Naive thymus-derived CD4-positive, alpha-beta T cell (primary cell): ENCODE measurements at regions of chr21 and their contacts with region 1.

Region 1: DNA sequence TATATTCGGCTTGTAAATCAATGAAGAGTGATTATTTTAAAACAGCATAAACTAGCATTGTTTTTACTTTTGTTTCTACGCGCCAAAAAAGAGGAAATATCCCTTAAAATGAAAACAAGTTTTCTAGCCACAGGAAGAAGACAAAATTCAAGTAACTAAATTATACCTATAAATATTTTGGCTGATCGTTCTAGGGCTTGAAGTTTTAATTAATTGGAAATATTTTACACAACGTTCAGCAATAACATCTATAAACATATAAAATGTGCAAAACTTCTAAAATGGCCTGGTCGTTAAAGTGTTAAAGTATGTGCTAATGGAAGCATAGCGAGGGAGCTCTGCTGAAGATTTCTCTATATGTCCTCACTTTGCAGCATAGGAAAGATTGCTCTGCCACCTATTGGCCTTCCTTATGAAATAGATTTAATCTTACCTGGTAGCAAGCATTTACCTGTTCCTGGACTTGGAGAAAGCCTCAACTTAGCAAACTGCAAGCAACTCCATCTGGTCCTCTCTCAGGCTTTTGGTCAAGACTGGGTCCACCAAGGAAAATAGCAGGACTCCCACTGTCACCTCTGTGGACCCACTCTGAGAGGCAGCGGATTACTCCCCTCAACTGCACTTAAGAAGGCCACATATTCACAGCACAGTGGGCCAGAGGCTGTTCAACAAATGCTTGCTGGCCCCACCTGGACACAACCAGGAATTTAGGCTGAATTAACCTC is 351.3 kb upstream of the RUNX1 start:
- DNase-seq: peak in 8 of 9 donors; percentile 23 to 73 (median 63)
- ATAC-seq: peak; percentile 88
- H3K4me3 ChIP-seq: no peak overlapping the region
- H3K4me3 Mint-ChIP-seq: peak overlapping the region in 3 of 10 donors; percentile 0 to 9 (median 1)
- H3K27ac ChIP-seq: no peak overlapping the region
- H3K27ac Mint-ChIP-seq: peak overlapping the region in 1 of 9 donors; percentile 65
- H3K4me1 ChIP-seq: no peaks in the 10 kb centered on the region
- H3K4me1 Mint-ChIP-seq: peaks cover 7 to 21% (median 15%) of the 10 kb centered on the region in 7 donors
- H3K27me3 ChIP-seq: no peaks in the 10 kb centered on the region
- H3K27me3 Mint-ChIP-seq: peaks cover 0 to 4% (median 0%) of the 10 kb centered on the region in 5 donors

Region 2: DNA sequence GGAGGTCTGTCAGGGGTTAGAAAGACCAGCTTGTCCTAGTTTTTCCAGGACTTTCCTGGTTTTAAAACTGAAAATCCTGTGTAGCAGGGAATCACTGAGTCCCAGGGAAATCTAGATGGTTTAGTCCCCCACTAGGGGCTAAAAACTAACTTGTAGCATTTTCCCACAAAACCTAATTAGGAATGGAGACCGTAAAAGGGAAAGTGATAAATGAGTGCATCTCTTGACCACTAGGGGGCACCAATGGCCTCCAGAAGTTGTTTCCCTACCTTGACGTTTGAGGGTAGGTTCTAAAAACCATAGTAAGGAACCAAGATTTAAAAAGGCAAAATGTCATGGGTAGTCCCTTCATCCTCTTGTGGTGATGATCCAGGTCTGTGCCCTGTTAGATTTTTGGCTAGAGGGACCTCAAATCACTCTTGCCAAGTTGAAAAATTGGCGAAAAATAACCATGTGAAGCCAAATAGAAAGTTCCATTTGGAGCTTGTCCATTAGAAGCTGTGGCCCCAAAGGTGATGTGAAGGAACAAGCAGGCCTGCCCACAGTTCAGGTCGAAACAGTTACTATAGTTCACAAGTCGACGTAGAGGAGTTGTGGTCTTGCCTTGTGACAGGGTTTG is 707.1 kb before region 1 on chr21:
- CTCF ChIA-PET with region 1: interaction called, 7 read pairs
- POLR2A ChIA-PET with region 1: no interaction called
- intact Hi-C with region 1: loop called in 1 of 2 experiments (anchors 1 kb)
- DNase-seq: peak in 7 of 9 donors; percentile 33 to 63 (median 58)
- ATAC-seq: peak; percentile 72
- H3K4me3 ChIP-seq: no peak overlapping the region
- H3K4me3 Mint-ChIP-seq: no peak overlapping the region
- H3K27ac ChIP-seq: no peak overlapping the region
- H3K27ac Mint-ChIP-seq: no peak overlapping the region
- H3K4me1 ChIP-seq: no peaks in the 10 kb centered on the region
- H3K4me1 Mint-ChIP-seq: peaks cover 0 to 10% (median 3%) of the 10 kb centered on the region in 7 donors
- H3K27me3 ChIP-seq: peaks cover 0 to 4% of the 10 kb centered on the region in 2 donors
- H3K27me3 Mint-ChIP-seq: peaks cover 2 to 43% (median 10%) of the 10 kb centered on the region in 5 donors

Region 3: DNA sequence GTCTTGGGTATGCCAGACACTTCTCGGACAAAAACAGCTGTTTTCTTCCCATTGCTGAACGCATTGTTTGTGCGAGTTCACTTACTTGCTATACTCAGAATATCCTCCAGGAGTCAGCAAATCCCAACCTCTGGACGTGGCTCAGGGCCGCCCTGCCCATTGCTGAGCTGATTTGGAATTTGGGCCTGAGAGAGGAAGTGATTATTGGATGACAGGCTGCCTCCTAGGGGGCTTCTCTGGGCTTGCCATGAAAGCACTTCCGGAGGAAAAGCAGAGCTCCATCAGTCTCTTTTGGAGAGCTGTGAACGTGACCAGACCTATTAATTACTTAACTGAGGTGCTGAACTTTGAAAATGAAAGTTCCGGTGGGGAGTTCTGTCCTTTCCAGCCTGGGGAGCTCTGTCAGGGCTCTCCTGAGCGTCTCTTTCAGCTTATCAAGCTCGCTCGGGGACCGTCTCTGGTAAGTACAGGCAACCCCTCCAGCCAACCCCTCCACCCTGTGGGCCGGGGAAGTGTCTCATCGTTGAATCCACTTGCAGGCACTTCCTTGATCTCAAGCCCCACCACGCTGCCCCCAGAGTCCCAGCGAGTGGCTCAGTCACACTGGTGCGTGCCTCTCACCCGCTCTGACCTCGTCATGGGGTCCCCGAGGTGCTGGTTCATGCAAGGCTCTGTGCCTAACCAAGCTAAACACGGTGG is 654.7 kb before region 1 on chr21:
- CTCF ChIA-PET with region 1: interaction called, 27 read pairs
- POLR2A ChIA-PET with region 1: interaction called, 4 read pairs
- intact Hi-C with region 1: loop called (anchors 1 kb)
- DNase-seq: peak; percentile 27 to 65 (median 49)
- ATAC-seq: peak; percentile 92
- H3K4me3 ChIP-seq: no peak overlapping the region
- H3K4me3 Mint-ChIP-seq: peak overlapping the region; percentile 25 to 75 (median 60)
- H3K27ac ChIP-seq: no peak overlapping the region
- H3K27ac Mint-ChIP-seq: no peak overlapping the region
- H3K4me1 ChIP-seq: no peaks in the 10 kb centered on the region
- H3K4me1 Mint-ChIP-seq: peaks cover 0 to 5% (median 4%) of the 10 kb centered on the region in 7 donors
- H3K27me3 ChIP-seq: no peaks in the 10 kb centered on the region
- H3K27me3 Mint-ChIP-seq: peaks cover 0 to 19% (median 4%) of the 10 kb centered on the region in 5 donors

Region 4: GRCh38 chr21:34894401-34894800 is 506.0 kb before region 1 on chr21:
- CTCF ChIA-PET with region 1: interaction called, 19 read pairs
- POLR2A ChIA-PET with region 1: interaction called, 7 read pairs
- intact Hi-C with region 1: loop called (anchors 1 kb)
- DNase-seq: no peak
- ATAC-seq: no peak
- H3K4me3 ChIP-seq: no peak overlapping the region
- H3K4me3 Mint-ChIP-seq: peak overlapping the region in 4 of 10 donors; percentile 1 to 49 (median 29)
- H3K27ac ChIP-seq: no peak overlapping the region
- H3K27ac Mint-ChIP-seq: peak overlapping the region in 8 of 9 donors; percentile 48 to 86 (median 78)
- H3K4me1 ChIP-seq: peaks cover 8 to 24% of the 10 kb centered on the region in 2 donors
- H3K4me1 Mint-ChIP-seq: peaks cover 26 to 72% (median 62%) of the 10 kb centered on the region in 7 donors
- H3K27me3 ChIP-seq: no peaks in the 10 kb centered on the region
- H3K27me3 Mint-ChIP-seq: peaks cover 0 to 24% (median 0%) of the 10 kb centered on the region in 5 donors

Region 5: DNA sequence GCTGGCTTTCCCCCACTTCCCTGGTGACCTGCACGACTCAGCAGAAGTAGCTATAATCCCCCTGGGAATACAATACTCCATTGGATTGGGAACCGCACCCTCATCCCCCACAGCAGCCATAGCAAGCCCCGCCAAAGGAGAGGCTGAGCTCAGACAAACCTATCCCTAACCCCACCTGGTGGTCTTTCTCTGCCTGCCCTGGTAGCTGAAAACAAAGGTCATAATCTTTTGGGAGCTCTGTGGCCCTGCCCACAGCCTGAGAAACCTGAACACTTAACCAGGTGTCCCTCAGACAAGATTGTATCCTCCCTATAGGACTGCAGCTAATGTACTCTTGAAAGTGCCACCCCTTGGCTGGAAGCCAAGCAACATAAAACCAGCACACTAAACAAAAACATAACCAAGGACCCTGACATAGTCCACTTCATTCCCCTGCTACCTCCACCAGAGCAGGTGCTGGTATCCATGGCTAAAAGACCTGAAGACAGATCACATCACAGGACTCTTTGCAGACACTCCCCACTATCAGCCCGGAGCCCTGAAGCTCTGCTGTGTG is 279.7 kb before region 1 on chr21:
- CTCF ChIA-PET with region 1: no interaction called
- POLR2A ChIA-PET with region 1: no interaction called
- intact Hi-C with region 1: no loop called
- DNase-seq: no peak
- ATAC-seq: no peak
- H3K4me3 ChIP-seq: no peak overlapping the region
- H3K4me3 Mint-ChIP-seq: no peak overlapping the region
- H3K27ac ChIP-seq: no peak overlapping the region
- H3K27ac Mint-ChIP-seq: peak overlapping the region in 1 of 9 donors; percentile 43
- H3K4me1 ChIP-seq: no peaks in the 10 kb centered on the region
- H3K4me1 Mint-ChIP-seq: peaks cover 0 to 2% (median 0%) of the 10 kb centered on the region in 7 donors
- H3K27me3 ChIP-seq: no peaks in the 10 kb centered on the region
- H3K27me3 Mint-ChIP-seq: no peaks in the 10 kb centered on the region

Region 6: DNA sequence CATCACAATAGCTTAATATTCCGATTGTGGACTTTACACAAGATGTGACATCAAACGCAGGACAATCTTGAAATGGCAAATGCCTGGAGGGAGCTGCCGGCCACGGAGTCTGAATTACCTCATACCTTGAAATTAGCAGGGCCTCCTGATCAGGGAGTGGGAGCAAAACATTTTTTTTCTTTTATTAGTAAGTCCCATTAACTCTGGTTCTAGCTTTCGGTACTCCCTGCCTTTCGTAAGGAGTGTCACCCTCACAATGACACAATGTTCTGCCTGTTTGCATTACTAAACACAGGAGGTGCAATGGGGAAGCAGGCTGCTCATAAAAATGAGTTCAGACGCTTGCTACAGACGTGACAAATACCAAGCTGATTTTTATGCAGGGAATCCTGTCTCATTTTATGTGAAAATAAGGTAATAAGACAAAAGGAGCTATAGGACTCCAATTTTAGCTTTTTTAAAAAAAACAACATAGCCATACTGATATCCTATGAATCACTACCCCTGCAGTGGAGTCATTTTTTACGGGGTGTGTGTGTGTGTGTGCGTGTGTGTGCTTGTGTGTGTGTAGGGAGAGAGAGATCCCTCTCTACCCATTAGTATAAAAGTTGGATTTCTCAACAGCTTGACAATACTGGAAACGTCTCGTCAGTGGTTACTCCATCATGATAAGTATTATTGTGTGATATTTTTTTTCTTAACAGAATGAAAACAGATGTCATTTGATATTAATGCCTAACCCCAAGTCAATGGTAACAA is 146.2 kb before region 1 on chr21:
- CTCF ChIA-PET with region 1: no interaction called
- POLR2A ChIA-PET with region 1: no interaction called
- intact Hi-C with region 1: no loop called
- DNase-seq: no peak
- ATAC-seq: no peak
- H3K4me3 ChIP-seq: no peak overlapping the region
- H3K4me3 Mint-ChIP-seq: no peak overlapping the region
- H3K27ac ChIP-seq: no peak overlapping the region
- H3K27ac Mint-ChIP-seq: no peak overlapping the region
- H3K4me1 ChIP-seq: no peaks in the 10 kb centered on the region
- H3K4me1 Mint-ChIP-seq: no peaks in the 10 kb centered on the region
- H3K27me3 ChIP-seq: no peaks in the 10 kb centered on the region
- H3K27me3 Mint-ChIP-seq: peaks cover 0 to 2% (median 0%) of the 10 kb centered on the region in 5 donors

Region 7: DNA sequence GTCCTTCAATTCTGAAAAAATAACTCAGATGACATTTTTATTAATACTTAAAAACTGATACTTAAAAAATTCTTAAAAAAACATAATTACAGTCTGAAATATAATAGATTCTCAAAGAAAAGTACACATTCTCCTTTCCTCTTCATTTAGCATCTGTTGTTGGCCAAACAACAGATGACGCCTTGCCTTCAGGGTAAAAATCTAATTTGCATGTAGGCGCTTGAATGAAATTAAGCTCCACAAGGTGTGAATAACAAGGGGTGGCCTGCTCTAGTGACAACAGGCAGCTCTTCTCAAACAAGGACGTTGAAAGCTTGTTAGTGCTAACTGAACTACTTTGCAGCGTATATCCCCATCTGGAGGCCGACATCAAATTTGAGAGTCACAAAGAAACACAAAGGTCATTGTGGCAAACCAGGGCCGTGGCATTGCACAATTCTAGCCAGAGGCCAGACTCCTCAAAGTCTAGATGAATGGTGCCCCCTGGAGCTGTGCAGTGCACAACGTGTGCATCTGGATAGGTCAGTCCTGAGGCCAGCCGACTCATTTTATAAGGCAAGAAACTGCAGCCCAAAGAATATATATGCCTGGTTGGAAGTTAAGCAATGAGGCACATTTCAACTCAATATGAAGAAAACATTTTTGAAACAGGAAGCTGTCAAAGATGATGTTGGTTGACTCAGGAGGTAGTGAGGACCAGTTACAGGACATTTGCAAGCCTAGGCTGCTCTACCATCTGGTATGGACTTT is 107.9 kb after region 1 on chr21:
- CTCF ChIA-PET with region 1: interaction called, 3 read pairs
- POLR2A ChIA-PET with region 1: no interaction called
- intact Hi-C with region 1: loop called in 1 of 2 experiments (anchors 1 kb)
- DNase-seq: peak in 2 of 9 donors; percentile 18 to 25
- ATAC-seq: peak; percentile 77
- H3K4me3 ChIP-seq: no peak overlapping the region
- H3K4me3 Mint-ChIP-seq: peak overlapping the region in 1 of 10 donors; percentile 23
- H3K27ac ChIP-seq: no peak overlapping the region
- H3K27ac Mint-ChIP-seq: peak overlapping the region in 6 of 9 donors; percentile 38 to 70 (median 60)
- H3K4me1 ChIP-seq: peaks cover 0 to 37% of the 10 kb centered on the region in 2 donors
- H3K4me1 Mint-ChIP-seq: peaks cover 30 to 77% (median 70%) of the 10 kb centered on the region in 7 donors
- H3K27me3 ChIP-seq: no peaks in the 10 kb centered on the region
- H3K27me3 Mint-ChIP-seq: peaks cover 0 to 3% (median 0%) of the 10 kb centered on the region in 5 donors

Region 8: GRCh38 chr21:35840197-35840799 is 439.9 kb after region 1 on chr21:
- CTCF ChIA-PET with region 1: interaction called, 3 read pairs
- POLR2A ChIA-PET with region 1: no interaction called
- intact Hi-C with region 1: loop called (anchors 1 to 2 kb)
- DNase-seq: peak in 7 of 9 donors; percentile 30 to 69 (median 52)
- ATAC-seq: peak; percentile 69
- H3K4me3 ChIP-seq: no peak overlapping the region
- H3K4me3 Mint-ChIP-seq: no peak overlapping the region
- H3K27ac ChIP-seq: no peak overlapping the region
- H3K27ac Mint-ChIP-seq: no peak overlapping the region
- H3K4me1 ChIP-seq: peaks cover 0 to 4% of the 10 kb centered on the region in 2 donors
- H3K4me1 Mint-ChIP-seq: peaks cover 0 to 18% (median 5%) of the 10 kb centered on the region in 7 donors
- H3K27me3 ChIP-seq: no peaks in the 10 kb centered on the region
- H3K27me3 Mint-ChIP-seq: peaks cover 0 to 6% (median 0%) of the 10 kb centered on the region in 5 donors

Region 9: DNA sequence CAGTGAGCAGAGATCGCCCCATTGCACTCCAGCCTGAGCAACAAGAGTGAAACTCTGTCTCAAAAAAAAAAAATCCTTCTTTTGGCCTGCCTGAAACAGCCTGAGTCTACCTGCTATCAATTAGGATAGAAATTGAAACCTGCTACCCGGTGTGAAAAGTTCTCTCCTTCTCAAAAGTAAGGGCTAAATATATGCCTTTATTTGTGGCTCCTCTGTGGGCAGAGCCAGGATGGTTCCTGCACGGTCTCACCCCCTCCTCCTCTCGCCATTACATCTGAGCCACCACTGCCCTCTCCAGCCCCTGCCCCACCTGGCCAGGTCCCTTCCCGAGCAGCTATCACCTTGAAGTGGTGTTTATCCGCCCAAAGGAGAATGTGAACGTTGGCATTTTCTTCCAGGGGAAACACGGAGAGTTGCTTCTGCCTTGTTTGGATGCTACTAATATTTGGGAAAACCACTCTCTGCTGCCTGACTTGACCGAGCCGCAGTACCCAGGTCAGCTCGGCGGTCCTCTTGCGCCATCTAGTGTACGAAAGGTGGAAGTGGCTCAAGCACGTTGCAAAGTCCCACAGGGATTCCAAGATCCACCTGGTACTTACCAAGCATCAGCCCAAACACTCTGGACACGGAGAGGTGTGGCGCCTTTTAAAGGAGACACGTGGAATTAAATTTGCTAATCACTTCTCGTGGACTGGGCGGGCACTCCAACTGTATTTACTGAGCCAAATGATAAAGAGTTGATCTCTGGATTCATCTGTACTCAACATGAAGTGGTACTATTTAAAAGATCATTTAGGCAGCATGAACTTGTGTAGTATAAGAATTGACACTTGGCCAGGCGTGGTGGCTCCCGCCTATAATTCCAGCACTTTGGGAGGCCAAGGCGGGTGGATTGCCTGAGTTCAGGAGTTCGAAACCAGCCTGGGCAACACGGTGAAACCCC is 628.0 kb after region 1 on chr21:
- CTCF ChIA-PET with region 1: no interaction called
- POLR2A ChIA-PET with region 1: no interaction called
- intact Hi-C with region 1: loop called in 1 of 2 experiments (anchors 5 kb)
- DNase-seq: peak; percentile 39 to 73 (median 62)
- ATAC-seq: peak; percentile 87
- H3K4me3 ChIP-seq: no peak overlapping the region
- H3K4me3 Mint-ChIP-seq: peak overlapping the region in 2 of 10 donors; percentile 22 to 25
- H3K27ac ChIP-seq: no peak overlapping the region
- H3K27ac Mint-ChIP-seq: no peak overlapping the region
- H3K4me1 ChIP-seq: peaks cover 0 to 4% of the 10 kb centered on the region in 2 donors
- H3K4me1 Mint-ChIP-seq: peaks cover 4 to 10% (median 5%) of the 10 kb centered on the region in 7 donors
- H3K27me3 ChIP-seq: no peaks in the 10 kb centered on the region
- H3K27me3 Mint-ChIP-seq: no peaks in the 10 kb centered on the region